Heart left ventricle (tissue), 16 donors: ENCODE measurements at regions of chr2 and their contacts with region 1.

Region 1: GRCh38 chr2:1099418-1099817 is 148.8 kb downstream of the SNTG2 start:
- DNase-seq: no peak
- ATAC-seq: peak in 1 of 4 donors; percentile 31
- H3K4me3 ChIP-seq: no peak overlapping the region
- H3K27ac ChIP-seq: no peak overlapping the region
- H3K4me1 ChIP-seq: no peaks in the 10 kb centered on the region
- H3K27me3 ChIP-seq: no peaks in the 10 kb centered on the region
- CTCF ChIP-seq: no peak
- POLR2A ChIP-seq: no peak

Region 2: DNA sequence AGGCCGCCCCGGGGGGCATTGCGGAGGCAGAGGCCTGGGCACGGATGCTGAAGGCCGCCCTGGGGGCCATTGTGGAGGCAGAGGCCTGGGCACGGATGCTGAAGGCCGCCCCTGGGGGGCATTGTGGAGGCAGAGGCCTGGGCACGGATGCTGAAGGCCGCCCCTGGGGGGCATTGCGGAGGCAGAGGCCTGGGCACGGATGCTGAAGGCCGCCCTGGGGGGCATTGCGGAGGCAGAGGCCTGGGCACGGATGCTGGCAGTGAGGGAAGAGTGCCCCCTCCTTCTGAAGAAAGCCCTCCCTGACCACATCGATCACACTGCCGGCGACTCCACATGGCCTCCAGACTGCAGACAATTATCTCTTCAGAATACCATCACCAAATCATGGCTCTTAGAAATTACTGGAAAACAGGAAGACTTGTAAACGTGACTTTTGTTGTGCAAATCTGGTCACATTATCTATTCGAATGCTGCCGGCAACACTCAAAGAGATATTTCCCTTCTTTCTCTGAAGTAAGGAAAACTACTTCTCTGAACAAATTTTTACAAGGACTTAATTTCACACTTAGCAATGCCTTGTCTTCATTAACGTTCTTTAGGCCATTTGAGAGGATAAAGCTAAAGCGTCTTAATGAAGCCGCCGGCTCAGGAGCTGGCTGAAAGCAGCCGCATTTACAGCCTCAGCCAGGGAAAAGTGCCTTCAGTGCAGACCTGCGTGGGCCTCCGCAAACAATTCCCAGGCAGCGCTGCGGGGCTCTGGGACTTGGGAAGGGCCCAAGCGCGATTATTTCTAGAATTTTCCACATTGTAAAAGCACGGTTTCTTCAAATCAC is 166.9 kb before region 1 on chr2:
- intact Hi-C with region 1: no loop called
- DNase-seq: no peak
- ATAC-seq: peak in 1 of 4 donors; percentile 11
- H3K4me3 ChIP-seq: no peak overlapping the region
- H3K27ac ChIP-seq: no peak overlapping the region
- H3K4me1 ChIP-seq: no peaks in the 10 kb centered on the region
- H3K27me3 ChIP-seq: peaks cover 0 to 6% (median 0%) of the 10 kb centered on the region in 9 donors
- CTCF ChIP-seq: no peak
- POLR2A ChIP-seq: no peak

Region 3: GRCh38 chr2:997662-998061 is 101.8 kb before region 1 on chr2:
- intact Hi-C with region 1: no loop called
- DNase-seq: no peak
- ATAC-seq: no peak
- H3K4me3 ChIP-seq: no peak overlapping the region
- H3K27ac ChIP-seq: no peak overlapping the region
- H3K4me1 ChIP-seq: no peaks in the 10 kb centered on the region
- H3K27me3 ChIP-seq: peaks cover 0 to 7% (median 0%) of the 10 kb centered on the region in 9 donors
- CTCF ChIP-seq: no peak
- POLR2A ChIP-seq: no peak

Region 4: DNA sequence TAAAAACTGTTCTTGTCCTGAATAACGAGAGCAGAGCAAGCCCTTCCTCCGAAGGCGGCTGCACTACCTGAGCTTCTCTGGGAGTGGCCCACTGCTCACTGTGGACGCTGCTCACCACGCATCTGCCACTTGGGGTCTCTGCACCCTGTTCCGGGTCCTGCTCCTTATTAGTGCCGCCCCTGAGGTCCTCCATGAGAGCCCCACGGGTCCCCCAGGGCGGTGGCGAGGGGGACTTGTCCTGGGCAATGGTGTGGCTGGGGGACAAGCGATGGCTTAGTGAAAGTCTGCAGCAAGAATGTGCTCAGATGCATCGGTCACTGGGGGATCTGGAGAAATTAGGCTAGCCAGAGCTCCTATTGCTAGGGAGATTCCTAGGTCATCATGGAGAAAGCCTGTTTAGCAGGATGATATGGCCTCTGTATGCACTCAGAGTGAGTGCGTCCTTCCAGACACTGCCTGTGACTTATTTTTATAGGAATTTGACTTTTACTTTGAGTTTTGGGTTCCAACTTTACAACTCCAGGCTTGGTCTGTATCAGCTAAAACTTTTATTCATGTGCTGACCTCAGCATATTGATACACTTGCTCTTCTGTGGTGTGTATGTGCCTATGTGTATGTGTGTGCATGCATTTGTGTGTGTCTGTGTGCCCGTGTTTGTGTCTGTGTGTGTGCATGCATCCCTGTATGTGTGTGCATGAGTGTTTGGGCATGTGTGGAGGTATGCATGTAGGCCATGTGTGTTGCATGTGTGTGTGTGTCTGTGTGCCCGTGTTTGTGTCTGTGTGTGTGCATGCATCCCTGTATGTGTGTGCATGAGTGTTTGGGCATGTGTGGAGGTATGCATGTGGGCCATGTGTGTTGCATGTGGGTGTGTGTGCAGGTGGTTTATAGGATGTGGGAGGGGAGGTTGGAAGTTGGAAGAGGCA is 19.3 kb before region 1 on chr2:
- intact Hi-C with region 1: loop called in 1 of 10 experiments (anchors 2 kb)
- DNase-seq: no peak
- ATAC-seq: no peak
- H3K4me3 ChIP-seq: no peak overlapping the region
- H3K27ac ChIP-seq: no peak overlapping the region
- H3K4me1 ChIP-seq: no peaks in the 10 kb centered on the region
- H3K27me3 ChIP-seq: peaks cover 0 to 21% (median 0%) of the 10 kb centered on the region in 9 donors
- CTCF ChIP-seq: no peak
- POLR2A ChIP-seq: no peak